Activated CD4-positive, alpha-beta memory T cell treated with anti-CD3 and anti-CD28 coated beads for 36 hours (primary cell): ENCODE measurements at regions of chr2 and their contacts with region 1.

Region 1: GRCh38 chr2:64819774-64820696 is 166.3 kb upstream of the SERTAD2 start:
- DNase-seq: peak; percentile 83
- H3K4me3 Mint-ChIP-seq: peak overlapping the region; percentile 36
- H3K27ac Mint-ChIP-seq: peak overlapping the region; percentile 82
- H3K4me1 Mint-ChIP-seq: peaks cover 20% of the 10 kb centered on the region
- H3K27me3 Mint-ChIP-seq: no peaks in the 10 kb centered on the region

Region 2: DNA sequence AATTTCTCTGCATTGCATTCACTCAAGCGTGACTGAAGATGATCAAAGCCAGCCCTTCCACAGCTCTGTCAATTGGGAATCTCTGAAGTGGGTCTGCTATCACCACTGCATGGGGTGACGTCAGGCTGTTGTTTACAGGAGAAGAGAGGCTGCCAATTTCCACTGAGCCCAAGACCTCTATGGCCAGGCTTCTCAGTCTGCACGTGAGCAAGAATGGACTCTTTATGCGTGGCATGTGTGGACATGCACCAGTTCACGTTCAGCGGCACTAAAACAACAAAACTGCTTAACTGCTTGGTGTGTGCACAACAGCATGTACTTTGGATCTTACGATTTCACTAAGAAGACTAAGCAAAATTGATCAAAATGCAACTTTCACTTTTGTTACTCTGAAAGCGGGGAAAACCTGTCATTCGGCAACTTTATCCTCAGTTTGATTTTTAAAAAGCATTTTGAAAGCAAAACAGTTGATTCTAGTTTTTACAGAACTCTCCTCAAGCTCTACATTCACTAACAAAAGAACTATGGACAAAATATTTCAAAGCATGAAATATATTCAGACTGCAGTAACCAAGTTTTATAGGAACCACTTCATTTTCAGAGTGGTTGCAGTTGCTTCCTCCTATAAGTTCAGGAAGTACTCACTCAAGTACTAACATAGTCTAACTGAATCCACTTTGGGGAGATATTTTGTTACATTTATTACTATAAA is 89.3 kb before region 1 on chr2:
- CTCF ChIA-PET with region 1: no interaction called
- POLR2A ChIA-PET with region 1: no interaction called
- intact Hi-C with region 1: loop called (anchors 1 kb)
- DNase-seq: peak; percentile 47
- H3K4me3 Mint-ChIP-seq: peak overlapping the region; percentile 80
- H3K27ac Mint-ChIP-seq: peak overlapping the region; percentile 83
- H3K4me1 Mint-ChIP-seq: peaks cover 42% of the 10 kb centered on the region
- H3K27me3 Mint-ChIP-seq: no peaks in the 10 kb centered on the region

Region 3: DNA sequence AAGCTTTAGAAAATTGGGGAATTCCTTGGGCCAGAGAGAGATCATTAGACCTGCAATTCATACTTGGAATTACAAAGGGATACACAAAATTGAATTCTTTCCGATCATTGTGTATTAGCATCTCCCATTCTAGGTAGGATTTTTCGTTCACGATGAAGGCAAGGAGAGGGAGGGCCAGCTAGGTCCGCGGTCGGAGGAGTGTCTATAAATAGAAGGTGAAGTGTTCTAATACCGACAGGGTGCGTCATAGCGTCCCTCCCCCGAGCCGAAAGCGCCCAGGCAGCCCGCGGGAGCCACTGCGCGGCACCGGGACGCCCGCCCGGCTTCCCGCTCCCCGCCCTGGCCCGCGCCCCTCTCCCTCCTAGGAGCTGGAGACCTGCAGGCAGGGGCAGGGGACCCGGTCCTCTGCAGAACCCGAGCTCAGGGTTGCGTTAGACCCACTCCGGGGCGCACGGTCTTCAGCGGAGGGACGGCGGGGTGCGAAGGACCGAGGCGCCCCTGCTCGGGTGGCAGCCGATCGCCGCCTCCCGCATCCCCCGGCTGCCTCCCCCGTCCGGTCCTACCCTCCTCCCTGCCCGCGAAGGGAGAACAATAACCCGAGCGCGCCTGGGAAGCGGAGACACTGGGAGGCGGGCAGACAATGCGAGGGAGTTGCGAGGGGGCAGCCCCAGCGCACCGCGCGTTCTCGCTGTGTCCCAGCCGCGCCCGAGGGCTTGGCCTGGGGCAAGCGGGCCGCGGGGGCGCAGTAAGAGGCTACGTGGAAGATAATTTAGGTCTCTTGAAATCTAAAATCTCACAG is 52.2 kb before region 1 on chr2:
- CTCF ChIA-PET with region 1: no interaction called
- POLR2A ChIA-PET with region 1: no interaction called
- intact Hi-C with region 1: loop called (anchors 1 kb)
- DNase-seq: peak; percentile 84
- H3K4me3 Mint-ChIP-seq: peak overlapping the region; percentile 80
- H3K27ac Mint-ChIP-seq: peak overlapping the region; percentile 77
- H3K4me1 Mint-ChIP-seq: peaks cover 19% of the 10 kb centered on the region
- H3K27me3 Mint-ChIP-seq: no peaks in the 10 kb centered on the region

Region 4: GRCh38 chr2:64807417-64807816 is 12.6 kb before region 1 on chr2:
- CTCF ChIA-PET with region 1: interaction called, 3 read pairs
- POLR2A ChIA-PET with region 1: interaction called, 4 read pairs
- intact Hi-C with region 1: loop called (anchors 2 kb)
- DNase-seq: peak; percentile 84
- H3K4me3 Mint-ChIP-seq: no peak overlapping the region
- H3K27ac Mint-ChIP-seq: peak overlapping the region; percentile 32
- H3K4me1 Mint-ChIP-seq: peaks cover 26% of the 10 kb centered on the region
- H3K27me3 Mint-ChIP-seq: no peaks in the 10 kb centered on the region

Region 5: GRCh38 chr2:64865073-64865830 is 45.2 kb after region 1 on chr2:
- CTCF ChIA-PET with region 1: no interaction called
- POLR2A ChIA-PET with region 1: no interaction called
- intact Hi-C with region 1: loop called (anchors 5 kb)
- DNase-seq: peak; percentile 72
- H3K4me3 Mint-ChIP-seq: peak overlapping the region; percentile 57
- H3K27ac Mint-ChIP-seq: no peak overlapping the region
- H3K4me1 Mint-ChIP-seq: no peaks in the 10 kb centered on the region
- H3K27me3 Mint-ChIP-seq: peaks cover 5% of the 10 kb centered on the region

Region 6: DNA sequence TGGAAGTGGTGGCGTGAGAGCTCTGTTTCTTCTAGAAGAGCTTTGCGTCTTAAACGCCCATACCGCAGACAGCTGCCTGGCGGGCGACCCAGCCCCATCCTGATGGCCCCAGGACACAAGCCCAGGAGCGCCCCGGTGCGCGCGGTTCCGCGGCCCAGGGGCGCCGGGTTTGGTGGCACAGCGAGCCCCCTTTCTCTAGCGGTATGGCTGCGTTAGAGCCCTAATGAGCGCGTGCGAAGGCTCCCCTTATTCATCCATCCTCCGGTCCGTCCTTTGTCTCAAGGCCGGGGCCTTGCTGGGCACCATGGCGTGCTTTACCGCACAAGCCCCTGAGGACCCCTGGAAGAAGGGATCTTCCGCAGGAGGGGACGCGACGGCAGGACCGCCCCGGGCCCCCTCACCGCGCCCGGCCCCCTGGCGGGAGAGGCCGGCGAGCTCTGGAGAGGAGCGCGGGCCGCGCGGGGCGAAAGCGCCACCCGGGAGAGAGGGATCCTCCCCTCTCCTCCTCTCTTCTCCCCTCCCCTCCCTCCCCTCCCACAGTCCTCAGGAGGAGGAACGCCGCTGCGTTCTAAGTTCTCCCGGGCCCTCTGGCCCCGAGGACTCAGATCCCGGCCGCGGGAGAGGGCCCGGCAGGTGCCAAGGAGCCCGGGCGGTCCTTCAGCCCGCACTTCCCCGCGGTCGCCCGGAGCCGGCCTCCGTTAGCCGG is 168.5 kb after region 1 on chr2:
- CTCF ChIA-PET with region 1: no interaction called
- POLR2A ChIA-PET with region 1: no interaction called
- intact Hi-C with region 1: no loop called
- DNase-seq: peak; percentile 81
- H3K4me3 Mint-ChIP-seq: peak overlapping the region; percentile 59
- H3K27ac Mint-ChIP-seq: peak overlapping the region; percentile 65
- H3K4me1 Mint-ChIP-seq: peaks cover 54% of the 10 kb centered on the region
- H3K27me3 Mint-ChIP-seq: peaks cover 5% of the 10 kb centered on the region

Region 7: DNA sequence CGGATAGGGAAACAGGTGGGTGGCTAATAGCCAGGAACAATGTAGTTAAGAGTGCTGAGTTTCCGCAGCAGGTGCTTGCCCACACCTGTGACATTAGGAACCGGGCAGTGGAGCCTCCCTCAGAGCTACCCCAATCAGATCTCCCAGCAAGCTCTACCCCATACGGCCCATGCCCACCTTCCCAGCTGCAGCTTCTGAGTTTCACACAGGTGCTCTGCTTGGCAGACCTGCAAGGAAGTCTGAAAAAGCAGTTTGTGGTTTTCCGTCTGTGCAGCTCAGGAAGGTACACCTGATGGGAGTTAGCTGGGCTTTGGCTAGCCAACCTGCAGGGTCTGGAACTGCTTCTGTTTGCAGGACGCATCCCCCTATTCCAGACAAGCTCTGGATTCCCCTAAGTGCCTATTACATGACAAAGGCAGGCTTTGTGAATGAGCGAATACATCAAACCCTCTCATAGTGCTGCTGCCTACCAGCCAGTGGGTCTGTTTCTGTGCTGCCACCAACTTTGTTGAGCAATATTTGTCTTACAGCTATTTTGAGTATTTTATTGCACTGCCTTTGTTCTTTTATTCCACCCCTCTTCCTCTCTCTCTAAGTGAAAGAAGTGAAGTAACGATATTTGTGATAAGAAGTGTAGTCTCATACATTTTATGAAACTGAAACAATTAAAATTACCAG is 211.4 kb after region 1 on chr2:
- CTCF ChIA-PET with region 1: no interaction called
- POLR2A ChIA-PET with region 1: no interaction called
- intact Hi-C with region 1: no loop called
- DNase-seq: peak; percentile 13
- H3K4me3 Mint-ChIP-seq: no peak overlapping the region
- H3K27ac Mint-ChIP-seq: no peak overlapping the region
- H3K4me1 Mint-ChIP-seq: peaks cover 23% of the 10 kb centered on the region
- H3K27me3 Mint-ChIP-seq: no peaks in the 10 kb centered on the region